ENCODE measurements at regions of chr18 and their contacts with region 1.

Region 1: DNA sequence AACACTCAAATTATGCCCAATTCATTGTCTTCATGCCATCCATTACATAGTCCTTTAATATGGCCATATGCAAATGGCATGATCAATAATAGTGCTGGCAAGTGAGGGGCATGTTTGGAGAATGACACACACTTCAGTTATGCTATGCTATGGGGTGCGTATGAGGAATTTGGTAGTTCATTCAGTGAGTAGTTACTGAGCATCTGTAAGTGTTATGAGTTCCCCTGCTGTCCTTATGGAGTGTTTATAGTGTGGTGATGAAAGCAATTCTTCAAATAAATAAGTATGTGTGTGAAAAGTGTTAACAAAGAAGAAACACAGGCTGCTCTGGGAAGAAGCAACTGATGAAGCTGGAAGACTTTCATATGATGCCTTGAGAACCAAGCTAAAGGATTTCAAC is 383.7 kb upstream of the SLC14A2 start:
- DNase-seq: no peak
- ATAC-seq: no peak
- H3K4me3 ChIP-seq: no peak overlapping the region
- H3K27ac ChIP-seq: no peak overlapping the region
- H3K4me1 ChIP-seq: no peaks in the 10 kb centered on the region
- H3K27me3 ChIP-seq: no peaks in the 10 kb centered on the region

Region 2: GRCh38 chr18:45169610-45170009 is 62.0 kb before region 1 on chr18:
- intact Hi-C with region 1: loop called in 1 of 4 experiments (anchors 10 kb)
- DNase-seq: peak; percentile 31 to 70 (median 70)
- ATAC-seq: peak; percentile 79 to 86
- H3K4me3 ChIP-seq: no peak overlapping the region
- H3K27ac ChIP-seq: no peak overlapping the region
- H3K4me1 ChIP-seq: no peaks in the 10 kb centered on the region
- H3K27me3 ChIP-seq: no peaks in the 10 kb centered on the region

Measured in right cardiac atrium (tissue), 5 donors.